ENCODE measurements at regions of chr19 and their contacts with region 1.

Region 1: DNA sequence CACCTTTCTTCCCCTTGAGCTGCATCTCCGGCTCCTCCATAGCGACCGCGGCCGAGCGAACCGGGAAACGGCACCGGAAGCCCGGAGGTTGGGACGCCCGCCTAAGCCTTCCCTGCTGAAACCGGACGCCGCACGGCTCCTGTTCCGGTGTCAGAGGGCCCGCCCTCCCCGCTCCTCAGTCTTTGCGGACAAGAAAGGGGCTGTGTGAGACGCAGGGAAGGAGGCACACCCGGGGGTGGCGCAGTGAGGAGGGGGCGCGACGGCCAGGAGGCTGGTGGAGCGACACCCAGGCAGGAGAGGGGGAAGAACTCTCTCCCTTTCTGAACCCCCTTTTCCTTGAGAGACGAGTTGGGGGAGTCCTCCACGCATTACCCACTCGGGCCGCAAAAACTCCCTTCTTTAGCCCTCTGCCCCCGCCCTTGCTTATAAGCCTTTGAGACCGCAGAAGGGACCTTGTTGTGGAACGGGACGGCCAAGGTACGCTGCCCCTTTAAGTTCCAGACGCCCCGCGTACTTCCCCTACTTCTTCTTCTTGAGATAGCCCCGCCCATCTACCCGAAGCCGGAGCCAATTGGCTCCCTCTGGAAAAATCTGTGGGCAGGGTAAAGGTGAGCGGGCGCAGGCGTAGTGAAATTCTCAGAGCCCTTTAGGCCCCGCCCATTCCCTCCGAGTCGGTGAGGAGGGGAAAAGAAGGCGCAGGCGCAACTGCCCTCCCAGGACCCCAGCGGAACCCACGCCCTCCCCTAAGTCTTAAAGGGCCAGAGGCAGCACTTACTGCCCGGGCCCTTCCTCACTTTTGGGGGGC is at the starts of genes BORCS8 and RFXANK:
- DNase-seq: peak; percentile 99
- ATAC-seq: peak; percentile 90
- H3K4me3 ChIP-seq: peak within 1 kb of the TSS; percentile 69 to 99 (median 93)
- H3K4me3 Mint-ChIP-seq: peak within 1 kb of the TSS; percentile 97
- H3K27ac ChIP-seq: peak within 1 kb of the TSS; percentile 99 to 100
- H3K27ac Mint-ChIP-seq: peak within 1 kb of the TSS; percentile 98
- H3K4me1 ChIP-seq: peaks cover 28 to 42% of the 10 kb centered on the region in 2 donors
- H3K4me1 Mint-ChIP-seq: peaks cover 48% of the 10 kb centered on the region
- H3K27me3 ChIP-seq: no peaks in the 10 kb centered on the region
- H3K27me3 Mint-ChIP-seq: no peaks in the 10 kb centered on the region
- CTCF ChIP-seq: no peak
- total RNA-seq, gene BORCS8: 62.3 and 63.1 TPM in 2 replicates
- total RNA-seq, gene RFXANK: 77.9 and 80.7 TPM in 2 replicates

Region 2: DNA sequence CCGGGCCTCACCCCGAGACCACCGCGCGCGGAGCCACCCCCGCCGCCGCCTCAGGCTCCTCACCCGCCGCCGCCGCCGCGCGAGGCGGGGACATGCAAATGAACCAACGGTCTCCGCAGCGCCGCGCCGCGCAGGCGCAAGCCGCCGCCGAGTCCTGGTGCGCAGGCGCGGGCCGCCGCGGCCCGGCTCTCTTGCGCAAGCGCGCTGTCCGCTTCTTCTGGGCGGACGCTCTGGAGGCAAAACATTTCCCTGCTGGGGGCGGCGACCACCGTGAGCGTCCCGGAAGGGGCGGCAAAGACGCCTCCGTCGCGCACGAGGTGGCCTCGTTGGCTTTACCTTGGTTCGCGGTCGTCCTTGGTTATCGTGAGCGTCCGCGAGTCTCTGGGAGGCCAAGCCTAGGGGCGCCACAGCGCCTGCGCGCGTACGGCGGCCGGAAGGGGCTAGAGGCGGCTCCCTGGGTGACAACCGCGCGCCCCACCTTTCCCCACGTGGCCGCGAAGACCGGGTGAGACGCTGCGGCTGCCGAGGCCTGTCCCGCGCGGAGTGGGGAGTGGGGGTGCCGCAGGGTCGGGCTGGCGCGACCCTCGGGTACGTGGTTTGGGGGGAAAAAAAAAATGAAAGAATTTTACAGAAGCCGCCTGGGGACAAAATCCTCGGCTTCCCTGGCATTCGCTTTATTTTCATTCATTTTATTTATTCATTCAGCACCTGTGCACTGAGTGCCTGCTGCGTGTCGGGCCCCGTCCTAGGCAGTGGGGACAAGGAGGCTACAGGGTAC is 158.7 kb before region 1 on chr19 and contains the starts of genes ARMC6 and SUGP2:
- CTCF ChIA-PET with region 1: interaction called, 5 read pairs
- POLR2A ChIA-PET with region 1: interaction called, 4 read pairs
- intact Hi-C with region 1: loop called (anchors 1 kb)
- DNase-seq: peak; percentile 98
- ATAC-seq: peak; percentile 82
- H3K4me3 ChIP-seq: peak within 1 kb of the TSS; percentile 68 to 84 (median 74)
- H3K4me3 Mint-ChIP-seq: peak within 1 kb of the TSS; percentile 96
- H3K27ac ChIP-seq: peak within 1 kb of the TSS; percentile 65 to 76
- H3K27ac Mint-ChIP-seq: peak within 1 kb of the TSS; percentile 93
- H3K4me1 ChIP-seq: peaks cover 18 to 24% of the 10 kb centered on the region in 2 donors
- H3K4me1 Mint-ChIP-seq: peaks cover 26% of the 10 kb centered on the region
- H3K27me3 ChIP-seq: no peaks in the 10 kb centered on the region
- H3K27me3 Mint-ChIP-seq: no peaks in the 10 kb centered on the region
- CTCF ChIP-seq: no peak
- total RNA-seq, gene ARMC6: 15.2 TPM in 2 replicates
- total RNA-seq, gene SUGP2: 154 and 164 TPM in 2 replicates

Region 3: DNA sequence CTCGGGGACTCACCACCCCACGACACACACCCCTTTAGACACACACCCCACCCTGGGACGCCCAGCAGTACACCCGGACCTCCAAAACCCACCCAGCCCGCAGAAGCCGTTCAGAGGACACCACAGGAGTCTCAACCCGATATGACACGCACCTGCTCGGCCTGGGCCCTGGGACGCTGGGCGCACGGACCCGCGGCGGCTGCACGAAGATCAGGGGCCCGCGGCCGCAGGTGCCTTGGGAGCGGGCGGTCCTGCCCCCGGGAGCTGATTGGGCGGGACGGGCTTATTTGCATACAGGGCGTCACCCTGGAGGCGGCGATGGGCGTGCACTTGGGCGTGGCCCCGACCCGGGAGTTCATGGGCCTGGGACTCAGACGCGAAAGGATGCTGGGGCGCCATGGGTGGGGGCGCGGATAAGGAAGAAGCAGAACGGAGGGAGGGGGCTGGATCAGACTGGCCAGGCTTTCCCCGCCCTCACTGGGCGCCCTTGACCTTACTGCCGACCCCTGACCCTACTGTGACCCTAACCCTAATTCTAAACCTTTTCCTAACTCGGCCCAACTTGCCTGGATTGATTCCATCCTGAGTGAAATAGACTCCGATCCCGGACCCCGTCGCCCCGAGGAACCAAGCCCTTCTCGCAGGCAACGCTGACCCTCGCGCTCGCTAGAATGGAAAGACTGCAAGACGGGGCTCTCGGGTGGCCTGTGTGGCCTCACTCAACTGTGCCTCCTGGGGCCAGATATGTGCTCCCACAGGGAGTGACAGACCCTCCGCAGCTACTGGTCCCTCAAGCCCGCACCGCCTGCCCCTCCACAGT is 22.0 kb before region 1 on chr19 and contains the start of gene MEF2B:
- CTCF ChIA-PET with region 1: interaction called, 12 read pairs
- POLR2A ChIA-PET with region 1: no interaction called
- intact Hi-C with region 1: loop called (anchors 1 kb)
- DNase-seq: peak; percentile 88
- ATAC-seq: peak; percentile 95
- H3K4me3 ChIP-seq: peak within 1 kb of the TSS; percentile 7 to 46 (median 26)
- H3K4me3 Mint-ChIP-seq: peak within 1 kb of the TSS; percentile 82
- H3K27ac ChIP-seq: no peak within 1 kb of the TSS
- H3K27ac Mint-ChIP-seq: peak within 1 kb of the TSS; percentile 56
- H3K4me1 ChIP-seq: peaks cover 13 to 29% of the 10 kb centered on the region in 2 donors
- H3K4me1 Mint-ChIP-seq: peaks cover 34% of the 10 kb centered on the region
- H3K27me3 ChIP-seq: peaks cover 0 to 18% (median 2%) of the 10 kb centered on the region in 4 experiments
- H3K27me3 Mint-ChIP-seq: peaks cover 8% of the 10 kb centered on the region
- CTCF ChIP-seq: no peak
- total RNA-seq, gene MEF2B: 4.1 and 5.5 TPM in 2 replicates

Region 4: GRCh38 chr19:19224852-19225494 is 32.7 kb after region 1 on chr19:
- CTCF ChIA-PET with region 1: no interaction called
- POLR2A ChIA-PET with region 1: no interaction called
- intact Hi-C with region 1: loop called (anchors 1 kb)
- DNase-seq: peak; percentile 84
- ATAC-seq: peak; percentile 95
- H3K4me3 ChIP-seq: peak overlapping the region; percentile 12 to 53 (median 44)
- H3K4me3 Mint-ChIP-seq: peak overlapping the region; percentile 84
- H3K27ac ChIP-seq: no peak overlapping the region
- H3K27ac Mint-ChIP-seq: no peak overlapping the region
- H3K4me1 ChIP-seq: peaks cover 10% of the 10 kb centered on the region in 2 donors
- H3K4me1 Mint-ChIP-seq: peaks cover 6% of the 10 kb centered on the region
- H3K27me3 ChIP-seq: peaks cover 0 to 35% (median 9%) of the 10 kb centered on the region in 4 experiments
- H3K27me3 Mint-ChIP-seq: peaks cover 22% of the 10 kb centered on the region
- CTCF ChIP-seq: peak; percentile 89

Region 5: DNA sequence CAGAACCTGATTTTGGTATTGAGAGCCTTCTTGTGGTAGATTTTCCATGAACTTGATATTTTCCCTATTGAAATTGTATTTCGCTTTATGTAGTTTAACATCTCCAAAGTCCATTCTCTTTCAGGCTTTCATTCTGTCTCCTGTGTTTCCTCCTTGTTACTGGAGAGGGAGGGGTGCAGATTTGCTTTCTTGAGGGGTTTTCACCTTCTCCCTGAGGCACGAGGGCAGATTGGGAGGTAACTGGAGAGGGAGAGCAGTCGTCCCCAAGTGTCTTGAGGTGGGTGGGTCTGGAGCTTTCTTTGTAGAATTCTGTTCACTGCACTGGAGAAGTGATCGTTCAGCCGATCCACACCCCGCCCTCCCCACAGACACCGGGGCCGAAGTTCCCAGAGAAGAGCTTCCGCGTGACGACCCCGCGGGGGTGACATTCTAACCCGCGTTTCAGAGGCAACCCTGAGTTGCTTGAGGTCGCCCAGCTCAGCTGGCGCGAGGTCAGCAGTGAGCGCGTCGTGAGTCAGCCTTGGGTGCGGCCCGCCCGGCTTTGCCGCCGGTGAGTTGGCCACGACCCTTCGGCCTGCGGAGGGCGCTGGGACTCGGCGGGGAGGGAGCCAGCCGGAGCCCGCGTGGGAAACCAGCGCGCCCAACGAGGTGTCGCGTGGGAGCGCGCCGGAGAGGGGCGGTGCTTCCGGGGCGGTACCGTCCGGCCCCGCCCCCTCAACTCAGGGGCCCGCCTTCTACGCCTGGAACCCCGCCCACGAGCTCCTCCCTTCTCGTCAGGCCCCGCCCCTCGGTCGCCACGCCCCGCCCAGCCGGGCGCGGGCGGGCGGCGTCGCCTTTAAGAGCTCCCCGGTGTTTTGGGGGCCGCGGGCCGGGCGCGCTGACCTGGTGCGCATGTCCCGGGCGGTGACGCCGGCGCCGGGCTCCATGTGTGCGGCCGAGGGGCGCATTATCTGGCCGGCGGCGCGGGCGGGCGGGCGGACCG is 212.9 kb after region 1 on chr19 and contains the start of gene GATAD2A:
- CTCF ChIA-PET with region 1: no interaction called
- POLR2A ChIA-PET with region 1: no interaction called
- intact Hi-C with region 1: loop called (anchors 1 kb)
- DNase-seq: peak; percentile 96
- ATAC-seq: peak; percentile 88
- H3K4me3 ChIP-seq: peak within 1 kb of the TSS; percentile 55 to 86 (median 70)
- H3K4me3 Mint-ChIP-seq: peak within 1 kb of the TSS; percentile 91
- H3K27ac ChIP-seq: peak within 1 kb of the TSS; percentile 55 to 77
- H3K27ac Mint-ChIP-seq: peak within 1 kb of the TSS; percentile 92
- H3K4me1 ChIP-seq: peaks cover 32 to 37% of the 10 kb centered on the region in 2 donors
- H3K4me1 Mint-ChIP-seq: peaks cover 39% of the 10 kb centered on the region
- H3K27me3 ChIP-seq: no peaks in the 10 kb centered on the region
- H3K27me3 Mint-ChIP-seq: no peaks in the 10 kb centered on the region
- CTCF ChIP-seq: peak; percentile 38
- total RNA-seq, gene GATAD2A: 76.3 and 97.3 TPM in 2 replicates